Naive thymus-derived CD4-positive, alpha-beta T cell (primary cell): ENCODE measurements at regions of chr15 and their contacts with region 1.

Region 1: GRCh38 chr15:84748274-84749110 is at the start of gene ZNF592:
- DNase-seq: peak; percentile 69 to 85 (median 79)
- ATAC-seq: peak; percentile 86
- H3K4me3 ChIP-seq: peak within 1 kb of the TSS; percentile 96
- H3K4me3 Mint-ChIP-seq: peak within 1 kb of the TSS; percentile 94 to 99 (median 99)
- H3K27ac ChIP-seq: peak within 1 kb of the TSS; percentile 89
- H3K27ac Mint-ChIP-seq: peak within 1 kb of the TSS; percentile 94 to 100 (median 99)
- H3K4me1 ChIP-seq: peaks cover 29 to 37% of the 10 kb centered on the region in 2 donors
- H3K4me1 Mint-ChIP-seq: peaks cover 53 to 78% (median 71%) of the 10 kb centered on the region in 7 donors
- H3K27me3 ChIP-seq: no peaks in the 10 kb centered on the region
- H3K27me3 Mint-ChIP-seq: no peaks in the 10 kb centered on the region
- total RNA-seq, gene ZNF592: 36.6 to 39.0 (median 37.6) TPM

Region 2: DNA sequence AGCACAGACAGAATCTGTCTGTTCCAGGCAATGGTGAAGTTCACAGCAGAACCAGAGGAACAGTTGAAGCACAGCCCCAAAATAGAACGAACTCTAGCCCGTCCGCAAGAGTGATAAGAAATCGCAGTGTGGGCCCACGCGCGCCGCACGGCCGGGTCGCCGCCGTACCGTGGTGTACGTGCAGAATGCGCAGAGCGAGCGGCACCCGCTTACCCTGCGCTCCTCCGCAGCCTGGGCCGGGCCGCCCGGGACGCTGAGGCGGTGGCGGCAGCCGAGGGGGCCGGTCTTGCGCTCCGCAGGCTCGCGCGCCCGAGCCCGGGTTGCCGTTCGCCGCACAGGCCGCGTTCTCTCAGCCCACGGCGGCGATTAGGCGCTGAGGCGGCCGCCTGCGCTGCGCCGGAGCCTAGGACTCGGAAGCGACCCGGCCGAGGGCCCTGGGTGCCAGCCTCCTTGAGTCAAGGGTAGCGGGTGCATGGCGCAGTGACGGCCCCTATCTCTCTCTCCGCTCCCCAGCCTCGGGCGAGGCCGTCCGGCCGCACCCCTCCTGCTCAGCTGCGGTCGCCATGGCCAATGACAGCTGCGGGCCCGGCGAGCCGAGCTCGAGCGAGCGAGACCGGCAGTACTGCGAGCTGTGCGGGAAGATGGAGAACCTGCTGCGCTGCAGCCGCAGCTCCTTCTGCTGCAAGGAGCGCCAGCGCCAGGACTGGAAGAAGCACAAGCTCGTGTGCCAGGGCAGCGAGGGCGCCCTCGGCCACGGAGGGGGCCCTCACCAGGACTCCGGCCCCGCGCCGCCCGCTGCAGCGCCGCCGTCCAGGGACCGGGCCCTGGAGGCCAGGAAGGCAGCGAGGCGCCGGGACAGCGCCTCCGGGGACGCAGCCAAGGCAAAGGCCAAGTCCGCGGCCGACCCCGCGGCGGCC is 114.9 kb before region 1 on chr15:
- CTCF ChIA-PET with region 1: interaction called, 4 read pairs
- POLR2A ChIA-PET with region 1: interaction called, 4 read pairs
- intact Hi-C with region 1: loop called (anchors 1 kb)
- DNase-seq: peak; percentile 48 to 77 (median 66)
- ATAC-seq: peak; percentile 67
- H3K4me3 ChIP-seq: peak overlapping the region; percentile 96
- H3K4me3 Mint-ChIP-seq: peak overlapping the region; percentile 84 to 99 (median 98)
- H3K27ac ChIP-seq: peak overlapping the region; percentile 78
- H3K27ac Mint-ChIP-seq: peak overlapping the region; percentile 79 to 98 (median 93)
- H3K4me1 ChIP-seq: peaks cover 26 to 40% of the 10 kb centered on the region in 2 donors
- H3K4me1 Mint-ChIP-seq: peaks cover 23 to 58% (median 53%) of the 10 kb centered on the region in 7 donors
- H3K27me3 ChIP-seq: no peaks in the 10 kb centered on the region
- H3K27me3 Mint-ChIP-seq: no peaks in the 10 kb centered on the region

Region 3: DNA sequence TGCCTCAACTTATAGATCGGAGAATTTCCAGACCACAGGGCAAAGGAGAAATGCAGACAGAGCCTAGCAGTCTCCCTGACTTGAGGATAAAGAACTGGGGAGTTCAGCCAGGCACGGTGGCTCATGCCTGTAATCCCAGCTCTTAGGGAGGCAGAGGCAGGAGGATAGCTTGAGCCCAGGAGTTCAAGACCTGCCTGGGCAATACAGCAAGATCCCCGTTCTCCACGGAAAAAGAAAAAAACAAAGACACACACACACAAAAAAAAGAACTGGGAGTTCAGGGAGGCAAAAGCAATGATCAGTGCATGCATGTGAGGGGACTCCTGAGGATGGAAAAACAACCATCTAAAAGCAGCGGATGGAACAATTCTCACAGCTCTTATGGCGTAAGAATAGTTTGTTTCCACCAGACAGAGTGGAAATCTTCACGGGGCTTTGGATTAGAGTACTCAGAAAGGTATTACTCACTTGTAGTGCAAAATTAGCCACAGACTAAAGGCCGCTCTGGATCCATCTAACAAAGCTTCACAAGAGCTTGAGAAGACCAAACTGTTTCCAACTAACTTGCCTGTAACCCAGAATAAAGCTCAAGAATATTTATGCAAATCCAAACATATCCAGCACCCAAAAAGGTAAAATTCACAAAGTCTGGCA is 48.8 kb before region 1 on chr15:
- CTCF ChIA-PET with region 1: interaction called, 4 read pairs
- POLR2A ChIA-PET with region 1: interaction called, 8 read pairs
- intact Hi-C with region 1: loop called in 1 of 2 experiments (anchors 10 kb)
- DNase-seq: no peak
- ATAC-seq: no peak
- H3K4me3 ChIP-seq: no peak overlapping the region
- H3K4me3 Mint-ChIP-seq: peak overlapping the region in 8 of 10 donors; percentile 5 to 52 (median 36)
- H3K27ac ChIP-seq: no peak overlapping the region
- H3K27ac Mint-ChIP-seq: peak overlapping the region; percentile 13 to 67 (median 21)
- H3K4me1 ChIP-seq: peaks cover 8 to 30% of the 10 kb centered on the region in 2 donors
- H3K4me1 Mint-ChIP-seq: peaks cover 35 to 78% (median 71%) of the 10 kb centered on the region in 7 donors
- H3K27me3 ChIP-seq: no peaks in the 10 kb centered on the region
- H3K27me3 Mint-ChIP-seq: no peaks in the 10 kb centered on the region

Region 4: GRCh38 chr15:84725001-84725491 is 23.4 kb before region 1 on chr15:
- CTCF ChIA-PET with region 1: interaction called, 5 read pairs
- POLR2A ChIA-PET with region 1: interaction called, 357 read pairs
- intact Hi-C with region 1: loop called in 1 of 2 experiments (anchors 1 kb)
- DNase-seq: peak in 5 of 9 donors; percentile 30 to 63 (median 51)
- ATAC-seq: peak; percentile 88
- H3K4me3 ChIP-seq: peak overlapping the region; percentile 28
- H3K4me3 Mint-ChIP-seq: peak overlapping the region; percentile 69 to 85 (median 77)
- H3K27ac ChIP-seq: peak overlapping the region; percentile 42
- H3K27ac Mint-ChIP-seq: peak overlapping the region; percentile 85 to 96 (median 95)
- H3K4me1 ChIP-seq: peaks cover 22 to 42% of the 10 kb centered on the region in 2 donors
- H3K4me1 Mint-ChIP-seq: peaks cover 39 to 77% (median 55%) of the 10 kb centered on the region in 7 donors
- H3K27me3 ChIP-seq: no peaks in the 10 kb centered on the region
- H3K27me3 Mint-ChIP-seq: no peaks in the 10 kb centered on the region

Region 5: GRCh38 chr15:84761607-84762131 is 13.2 kb after region 1 on chr15:
- CTCF ChIA-PET with region 1: interaction called, 4 read pairs
- POLR2A ChIA-PET with region 1: interaction called, 5 read pairs
- intact Hi-C with region 1: loop called in 1 of 2 experiments (anchors 2 kb)
- DNase-seq: peak in 6 of 9 donors; percentile 14 to 42 (median 31)
- ATAC-seq: peak; percentile 37
- H3K4me3 ChIP-seq: no peak overlapping the region
- H3K4me3 Mint-ChIP-seq: no peak overlapping the region
- H3K27ac ChIP-seq: peak overlapping the region; percentile 51
- H3K27ac Mint-ChIP-seq: no peak overlapping the region
- H3K4me1 ChIP-seq: peaks cover 24 to 36% of the 10 kb centered on the region in 2 donors
- H3K4me1 Mint-ChIP-seq: peaks cover 5 to 24% (median 12%) of the 10 kb centered on the region in 7 donors
- H3K27me3 ChIP-seq: no peaks in the 10 kb centered on the region
- H3K27me3 Mint-ChIP-seq: no peaks in the 10 kb centered on the region

Region 6: GRCh38 chr15:85515212-85515611 is 766.7 kb after region 1 on chr15:
- CTCF ChIA-PET with region 1: no interaction called
- POLR2A ChIA-PET with region 1: no interaction called
- intact Hi-C with region 1: no loop called
- DNase-seq: no peak
- ATAC-seq: no peak
- H3K4me3 ChIP-seq: no peak overlapping the region
- H3K4me3 Mint-ChIP-seq: no peak overlapping the region
- H3K27ac ChIP-seq: no peak overlapping the region
- H3K27ac Mint-ChIP-seq: peak overlapping the region in 1 of 9 donors; percentile 17
- H3K4me1 ChIP-seq: no peaks in the 10 kb centered on the region
- H3K4me1 Mint-ChIP-seq: peaks cover 20 to 87% (median 71%) of the 10 kb centered on the region in 7 donors
- H3K27me3 ChIP-seq: no peaks in the 10 kb centered on the region
- H3K27me3 Mint-ChIP-seq: no peaks in the 10 kb centered on the region